Spleen (tissue), 13 donors: ENCODE measurements at regions of chr3 and their contacts with region 1.

Region 1: DNA sequence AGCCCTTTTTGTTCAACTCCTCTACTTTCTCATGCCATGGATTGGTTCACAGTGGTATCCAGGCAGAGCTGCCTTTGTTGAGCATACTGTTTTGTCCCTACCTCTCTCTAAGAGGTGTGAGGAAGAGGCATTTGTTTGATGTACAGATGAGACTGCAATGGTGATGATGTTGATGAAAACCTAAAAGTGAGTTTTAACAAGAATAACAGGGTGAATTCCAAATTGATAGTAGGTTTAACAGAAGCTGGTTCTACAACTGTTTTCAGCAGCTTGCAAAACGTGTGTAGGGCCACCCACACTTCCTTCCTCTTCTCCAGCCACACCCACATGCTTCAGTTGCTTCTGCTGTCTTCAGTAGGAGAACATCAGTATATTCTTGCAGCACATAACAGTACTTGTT is 10.2 kb downstream of the SNRK start:
- DNase-seq: peak; percentile 84
- H3K4me3 ChIP-seq: peak overlapping the region in 2 of 8 donors; percentile 1 to 45
- H3K27ac ChIP-seq: peak overlapping the region; percentile 32 to 99 (median 70)
- H3K4me1 ChIP-seq: peaks cover 77 to 100% (median 97%) of the 10 kb centered on the region in 6 donors
- H3K27me3 ChIP-seq: no peaks in the 10 kb centered on the region
- CTCF ChIP-seq: no peak
- POLR2A ChIP-seq: no peak

Region 2: DNA sequence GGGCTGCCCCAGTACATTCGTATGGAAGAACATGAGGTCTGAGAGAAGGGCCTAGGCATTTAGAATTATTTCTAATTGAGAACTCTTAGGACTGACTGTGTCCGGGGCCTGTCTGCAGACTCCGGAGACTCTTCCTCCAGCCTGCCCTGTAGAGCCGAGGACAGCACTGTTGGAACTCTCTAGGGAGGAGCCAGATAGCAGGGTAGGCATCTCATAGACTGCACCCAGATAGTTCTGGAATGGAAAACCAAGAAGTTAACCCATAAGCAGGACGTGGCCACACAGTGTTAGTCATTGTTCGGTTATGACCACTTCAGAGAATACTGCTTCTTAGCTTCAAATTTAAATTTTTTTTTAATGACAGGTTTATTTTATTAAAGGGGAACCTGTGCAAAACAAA is 49.3 kb after region 1 on chr3:
- intact Hi-C with region 1: loop called (anchors 10 kb)
- DNase-seq: no peak
- H3K4me3 ChIP-seq: no peak overlapping the region
- H3K27ac ChIP-seq: peak overlapping the region in 6 of 8 donors; percentile 27 to 88 (median 66)
- H3K4me1 ChIP-seq: peaks cover 16 to 86% (median 57%) of the 10 kb centered on the region in 6 donors
- H3K27me3 ChIP-seq: no peaks in the 10 kb centered on the region
- CTCF ChIP-seq: no peak
- POLR2A ChIP-seq: no peak

Region 3: GRCh38 chr3:43389388-43390254 is 93.1 kb after region 1 on chr3:
- intact Hi-C with region 1: loop called (anchors 10 kb)
- DNase-seq: peak; percentile 89
- H3K4me3 ChIP-seq: peak overlapping the region in 1 of 8 donors; percentile 60
- H3K27ac ChIP-seq: peak overlapping the region; percentile 69 to 95 (median 89)
- H3K4me1 ChIP-seq: peaks cover 10 to 62% (median 41%) of the 10 kb centered on the region in 6 donors
- H3K27me3 ChIP-seq: no peaks in the 10 kb centered on the region
- CTCF ChIP-seq: no peak
- POLR2A ChIP-seq: no peak